Activated CD4-positive, alpha-beta T cell treated with anti-CD3 and anti-CD28 coated beads for 36 hours (primary cell): ENCODE measurements at regions of chr1 and their contacts with region 1.

Region 1: DNA sequence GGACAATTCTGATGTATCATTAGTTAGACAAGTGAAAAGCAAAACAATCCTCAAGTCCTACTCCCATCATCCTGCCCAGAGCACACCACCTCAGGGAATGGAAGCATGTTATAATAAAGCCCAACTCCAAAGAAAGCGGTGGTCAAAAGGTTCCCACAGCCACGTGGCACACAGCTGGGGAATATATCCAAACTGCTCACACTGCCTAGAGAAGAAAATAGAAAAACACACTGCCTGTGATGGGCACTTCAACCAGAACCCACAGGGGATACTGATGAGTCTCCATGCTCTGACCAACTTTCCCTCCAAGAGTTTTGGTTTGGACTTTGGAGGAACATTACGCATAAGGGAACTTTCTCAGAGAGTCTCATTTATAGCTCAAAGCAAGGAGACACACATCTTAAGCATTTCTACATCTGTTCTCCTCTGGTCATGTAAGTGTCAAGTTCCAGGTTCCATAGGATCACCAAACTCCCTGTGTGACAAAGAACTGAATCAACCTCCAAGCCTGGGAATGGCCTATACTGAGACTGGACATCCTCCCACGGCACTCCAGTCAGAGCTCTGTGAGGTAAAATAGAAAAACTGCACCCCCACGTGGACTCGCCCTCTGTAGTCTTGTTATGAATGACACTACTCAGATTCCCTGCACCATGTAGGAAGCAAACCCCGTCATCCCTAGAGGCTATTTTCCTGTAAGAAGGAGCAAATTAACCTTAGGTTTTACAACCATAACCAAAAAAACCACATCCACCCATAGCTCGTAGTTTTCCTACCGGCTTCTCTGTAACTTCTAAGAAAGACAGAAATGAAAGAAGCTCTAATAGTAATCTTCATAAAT is 12.2 kb downstream of the DSTYK start:
- DNase-seq: peak; percentile 67
- ATAC-seq: peak; percentile 63
- H3K4me3 Mint-ChIP-seq: peak overlapping the region; percentile 50
- H3K27ac Mint-ChIP-seq: peak overlapping the region; percentile 94
- H3K4me1 Mint-ChIP-seq: peaks cover 68% of the 10 kb centered on the region
- H3K27me3 Mint-ChIP-seq: no peaks in the 10 kb centered on the region

Region 2: DNA sequence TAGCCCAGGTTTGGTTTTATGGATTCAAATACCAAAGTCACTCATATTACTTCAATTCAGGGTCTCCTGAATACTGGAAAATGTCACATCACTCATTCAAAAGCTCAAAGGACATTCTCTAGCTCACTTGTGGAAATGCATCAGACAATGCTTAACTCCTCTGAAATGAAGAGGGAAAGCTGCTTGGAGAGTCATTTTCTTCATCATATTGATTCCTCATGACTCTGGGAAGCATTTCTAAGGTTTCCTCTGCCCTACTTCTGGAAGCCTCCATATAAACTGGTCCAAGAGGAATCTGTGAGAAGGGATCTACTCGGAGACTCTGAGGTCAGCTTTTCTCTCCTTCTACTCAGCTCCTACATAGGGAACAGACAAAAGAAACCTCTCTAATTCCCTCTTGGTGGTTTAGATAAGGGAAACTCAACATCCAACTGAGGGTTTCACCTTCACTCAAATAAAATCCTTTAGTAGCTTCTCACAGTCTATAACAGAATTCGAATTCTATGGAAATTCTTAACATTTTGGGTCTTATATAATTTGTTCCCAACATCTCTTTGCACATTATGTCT is 41.2 kb before region 1 on chr1:
- CTCF ChIA-PET with region 1: interaction called, 3 read pairs
- POLR2A ChIA-PET with region 1: interaction called, 10 read pairs
- intact Hi-C with region 1: no loop called
- DNase-seq: no peak
- ATAC-seq: no peak
- H3K4me3 Mint-ChIP-seq: no peak overlapping the region
- H3K27ac Mint-ChIP-seq: no peak overlapping the region
- H3K4me1 Mint-ChIP-seq: no peaks in the 10 kb centered on the region
- H3K27me3 Mint-ChIP-seq: no peaks in the 10 kb centered on the region

Region 3: DNA sequence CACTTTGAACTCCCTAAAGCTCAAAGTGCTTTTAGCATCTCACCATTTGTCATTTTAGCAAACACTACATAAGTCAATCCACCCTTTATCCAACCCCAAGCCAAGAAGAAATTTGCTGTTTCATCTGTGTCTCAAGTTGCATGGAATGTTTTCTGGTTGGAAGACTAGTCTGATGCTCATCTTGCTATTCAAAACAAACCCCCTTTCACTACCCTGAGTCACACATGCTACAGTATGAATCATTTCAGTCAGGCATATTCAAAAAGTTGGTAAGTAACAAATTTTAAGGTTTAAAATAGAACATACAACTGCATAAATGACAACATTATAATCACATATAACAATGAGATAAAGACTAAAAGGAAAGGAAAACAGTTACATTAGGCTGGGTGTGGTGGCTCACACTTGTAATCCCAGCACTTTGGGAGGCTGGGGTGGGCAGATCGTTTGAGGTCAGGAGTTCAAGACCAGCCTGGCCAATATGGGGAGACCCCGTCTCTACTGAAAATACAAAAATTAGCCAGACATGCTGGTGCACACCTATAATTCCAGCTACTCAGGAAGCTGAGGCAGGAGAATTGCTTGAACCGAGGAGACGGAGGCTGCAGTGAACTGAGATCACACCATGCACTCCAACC is 26.5 kb before region 1 on chr1:
- CTCF ChIA-PET with region 1: interaction called, 5 read pairs
- POLR2A ChIA-PET with region 1: no interaction called
- intact Hi-C with region 1: loop called (anchors 1 to 2 kb)
- DNase-seq: peak; percentile 20
- ATAC-seq: peak; percentile 92
- H3K4me3 Mint-ChIP-seq: no peak overlapping the region
- H3K27ac Mint-ChIP-seq: peak overlapping the region; percentile 61
- H3K4me1 Mint-ChIP-seq: peaks cover 31% of the 10 kb centered on the region
- H3K27me3 Mint-ChIP-seq: no peaks in the 10 kb centered on the region

Region 4: GRCh38 chr1:205237526-205238484 is 38.5 kb after region 1 on chr1:
- CTCF ChIA-PET with region 1: interaction called, 13 read pairs
- POLR2A ChIA-PET with region 1: interaction called, 12 read pairs
- intact Hi-C with region 1: loop called (anchors 1 to 5 kb)
- DNase-seq: peak; percentile 82
- ATAC-seq: peak; percentile 89
- H3K4me3 Mint-ChIP-seq: peak overlapping the region; percentile 56
- H3K27ac Mint-ChIP-seq: peak overlapping the region; percentile 95
- H3K4me1 Mint-ChIP-seq: peaks cover 58% of the 10 kb centered on the region
- H3K27me3 Mint-ChIP-seq: no peaks in the 10 kb centered on the region